ENCODE measurements at regions of chr3 and their contacts with region 1.

Region 1: GRCh38 chr3:186365202-186365974 is 3.4 kb upstream of the DGKG start:
- DNase-seq: peak in 9 of 10 donors; percentile 56 to 86 (median 71)
- H3K4me3 ChIP-seq: no peak overlapping the region
- H3K27ac ChIP-seq: peak overlapping the region in 46 of 59 donors; percentile 8 to 88 (median 58)
- H3K27me3 ChIP-seq: peaks cover 0 to 19% (median 0%) of the 10 kb centered on the region in 45 donors
- CTCF ChIP-seq: no peak

Region 2: DNA sequence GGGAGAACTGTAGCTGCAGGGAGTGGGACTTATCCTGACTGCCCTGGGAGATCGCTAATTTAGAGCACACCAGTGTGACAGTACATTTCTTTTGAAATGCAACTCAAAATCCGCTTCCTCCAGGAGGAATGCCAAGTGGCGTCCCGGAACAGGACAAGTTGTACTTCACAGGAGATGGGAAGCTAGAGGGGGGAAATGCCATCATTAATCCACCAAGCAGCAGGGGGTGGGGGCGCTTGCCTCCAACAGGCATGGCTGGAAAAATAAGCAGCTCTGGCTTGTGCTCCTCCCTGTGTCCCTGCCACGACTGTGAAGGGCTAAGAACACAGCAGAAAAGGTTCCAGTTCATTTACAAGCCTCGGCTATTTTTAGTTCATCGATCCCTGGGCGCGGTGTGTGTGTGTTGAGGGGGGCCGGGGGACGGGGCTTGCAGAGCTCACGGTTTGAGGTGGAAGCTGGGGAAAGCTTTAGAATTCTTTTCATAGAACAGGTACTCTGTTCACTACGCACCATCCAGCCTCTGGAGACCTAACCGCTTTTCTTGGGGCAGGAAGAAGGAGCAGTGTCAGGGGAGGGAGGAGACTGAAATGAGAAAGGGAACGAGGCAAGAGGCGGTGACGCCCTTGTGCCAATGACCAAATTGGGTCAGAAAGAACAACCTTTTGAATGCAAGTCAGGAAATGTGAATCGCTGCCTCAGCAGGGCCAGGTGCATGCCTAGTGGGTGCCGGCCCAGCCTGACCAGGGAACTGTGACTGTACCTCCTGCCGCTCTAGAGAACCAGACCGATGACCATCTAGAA is 48.4 kb after region 1 on chr3:
- intact Hi-C with region 1: loop called in 1 of 2 experiments (anchors 1 kb)
- DNase-seq: peak in 8 of 10 donors; percentile 50 to 83 (median 66)
- H3K4me3 ChIP-seq: peak overlapping the region in 55 of 59 donors; percentile 16 to 66 (median 37)
- H3K27ac ChIP-seq: peak overlapping the region in 51 of 59 donors; percentile 8 to 90 (median 66)
- H3K27me3 ChIP-seq: peaks cover 0 to 2% (median 0%) of the 10 kb centered on the region in 45 donors
- CTCF ChIP-seq: no peak